ENCODE measurements at regions of chr2 and their contacts with region 1.

Region 1: DNA sequence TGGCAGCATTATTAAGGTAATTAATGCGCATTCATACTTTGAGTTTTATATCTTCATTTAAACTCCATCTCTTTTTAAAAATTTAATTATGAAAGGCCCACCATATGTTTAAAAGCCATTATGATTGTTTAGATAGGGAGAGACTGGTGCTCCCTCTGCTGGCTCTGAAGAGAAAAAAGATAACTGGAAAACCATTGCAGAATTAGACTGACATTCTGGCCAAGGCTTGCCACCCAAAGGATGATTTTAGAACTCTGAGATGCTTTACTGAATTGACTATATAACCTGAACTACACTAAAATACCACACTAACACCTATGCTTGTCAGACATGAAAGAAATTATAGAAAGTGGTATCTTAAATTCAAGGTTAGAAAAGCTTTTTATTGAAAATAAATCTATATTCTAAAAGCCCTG is 127.6 kb upstream of the SPOPL start:
- DNase-seq: no peak
- H3K4me3 ChIP-seq: no peak overlapping the region
- H3K27ac ChIP-seq: no peak overlapping the region
- H3K4me1 ChIP-seq: no peaks in the 10 kb centered on the region
- H3K27me3 ChIP-seq: no peaks in the 10 kb centered on the region
- CTCF ChIP-seq: peak; percentile 80

Region 2: DNA sequence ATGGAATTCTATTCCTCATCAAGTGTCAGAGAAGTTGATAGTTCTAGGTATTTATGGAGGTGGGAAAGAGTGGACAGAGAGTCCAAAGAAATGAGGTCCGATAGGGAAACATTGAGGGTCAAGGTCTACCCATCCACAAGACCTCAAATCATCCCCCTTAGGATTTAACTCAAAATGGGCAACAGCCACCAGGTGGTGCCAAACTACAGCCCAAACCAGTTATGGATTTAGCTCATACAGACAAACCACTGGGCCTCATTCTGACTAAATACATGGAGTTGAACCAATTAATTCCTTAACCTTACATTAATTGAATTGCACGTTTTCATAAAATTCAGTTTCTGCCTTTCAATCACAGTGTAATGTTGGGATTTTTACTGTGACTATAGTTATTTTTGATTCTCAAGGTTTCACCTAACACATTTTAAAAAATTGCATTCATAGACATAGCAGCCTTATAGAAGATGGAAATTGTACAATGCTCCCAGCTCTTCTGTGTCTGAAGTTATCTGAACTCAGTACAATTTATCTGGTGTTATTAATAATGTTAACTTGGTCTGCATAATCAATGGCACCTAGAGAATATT is 508.0 kb before region 1 on chr2:
- CTCF ChIA-PET with region 1: interaction called, 4 read pairs
- POLR2A ChIA-PET with region 1: no interaction called
- intact Hi-C with region 1: loop called (anchors 5 kb)
- DNase-seq: peak in 1 of 2 experiments; percentile 48
- H3K4me3 ChIP-seq: no peak overlapping the region
- H3K27ac ChIP-seq: no peak overlapping the region
- H3K4me1 ChIP-seq: no peaks in the 10 kb centered on the region
- H3K27me3 ChIP-seq: no peaks in the 10 kb centered on the region
- CTCF ChIP-seq: peak; percentile 73

Region 3: GRCh38 chr2:137910641-137911040 is 463.4 kb before region 1 on chr2:
- CTCF ChIA-PET with region 1: no interaction called
- POLR2A ChIA-PET with region 1: no interaction called
- intact Hi-C with region 1: loop called (anchors 1 kb)
- DNase-seq: no peak
- H3K4me3 ChIP-seq: no peak overlapping the region
- H3K27ac ChIP-seq: no peak overlapping the region
- H3K4me1 ChIP-seq: no peaks in the 10 kb centered on the region
- H3K27me3 ChIP-seq: no peaks in the 10 kb centered on the region
- CTCF ChIP-seq: peak; percentile 81

Region 4: GRCh38 chr2:137947728-137948336 is 426.2 kb before region 1 on chr2:
- CTCF ChIA-PET with region 1: no interaction called
- POLR2A ChIA-PET with region 1: no interaction called
- intact Hi-C with region 1: loop called (anchors 1 kb)
- DNase-seq: peak; percentile 51 to 59
- H3K4me3 ChIP-seq: no peak overlapping the region
- H3K27ac ChIP-seq: no peak overlapping the region
- H3K4me1 ChIP-seq: peaks cover 1% of the 10 kb centered on the region; the same call in 1 of the 2 replicates
- H3K27me3 ChIP-seq: no peaks in the 10 kb centered on the region
- CTCF ChIP-seq: peak; percentile 81

Region 5: GRCh38 chr2:138090330-138090729 is 283.7 kb before region 1 on chr2:
- CTCF ChIA-PET with region 1: no interaction called
- POLR2A ChIA-PET with region 1: no interaction called
- intact Hi-C with region 1: loop called (anchors 10 kb)
- DNase-seq: no peak
- H3K4me3 ChIP-seq: no peak overlapping the region
- H3K27ac ChIP-seq: no peak overlapping the region
- H3K4me1 ChIP-seq: peaks cover 13% of the 10 kb centered on the region
- H3K27me3 ChIP-seq: no peaks in the 10 kb centered on the region
- CTCF ChIP-seq: peak; percentile 68

Region 6: DNA sequence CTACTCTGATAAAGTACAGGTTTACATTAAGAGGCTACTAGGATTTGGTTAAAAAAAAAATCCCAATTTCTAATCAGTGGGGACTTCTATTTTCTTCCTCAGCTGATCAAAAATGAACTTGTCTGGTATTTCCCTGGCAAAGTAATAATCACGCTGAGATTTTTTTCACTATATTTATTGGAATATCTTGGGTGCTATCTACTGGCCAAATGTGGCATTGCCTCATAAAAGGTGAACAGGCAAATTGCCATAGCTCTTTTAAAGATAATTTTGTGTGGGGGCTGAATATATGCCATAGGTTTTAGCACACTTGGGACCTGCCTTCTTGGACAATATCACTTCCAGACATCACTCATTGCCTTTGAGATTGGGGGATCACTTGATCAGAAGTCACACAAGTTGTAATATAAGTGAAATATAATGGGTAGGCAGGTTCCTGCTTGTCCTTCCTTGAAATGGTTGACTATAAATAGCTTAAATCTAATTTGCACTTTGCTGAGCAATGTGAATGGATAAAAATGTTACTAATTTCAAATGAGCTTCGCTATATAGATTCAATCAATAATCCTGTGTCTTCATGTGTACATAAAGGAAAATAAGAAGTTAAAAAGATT is 413.2 kb after region 1 on chr2:
- CTCF ChIA-PET with region 1: no interaction called
- POLR2A ChIA-PET with region 1: no interaction called
- intact Hi-C with region 1: loop called (anchors 5 kb)
- DNase-seq: peak in 1 of 2 experiments; percentile 14
- H3K4me3 ChIP-seq: no peak overlapping the region
- H3K27ac ChIP-seq: no peak overlapping the region
- H3K4me1 ChIP-seq: no peaks in the 10 kb centered on the region
- H3K27me3 ChIP-seq: no peaks in the 10 kb centered on the region
- CTCF ChIP-seq: peak; percentile 82

Region 7: DNA sequence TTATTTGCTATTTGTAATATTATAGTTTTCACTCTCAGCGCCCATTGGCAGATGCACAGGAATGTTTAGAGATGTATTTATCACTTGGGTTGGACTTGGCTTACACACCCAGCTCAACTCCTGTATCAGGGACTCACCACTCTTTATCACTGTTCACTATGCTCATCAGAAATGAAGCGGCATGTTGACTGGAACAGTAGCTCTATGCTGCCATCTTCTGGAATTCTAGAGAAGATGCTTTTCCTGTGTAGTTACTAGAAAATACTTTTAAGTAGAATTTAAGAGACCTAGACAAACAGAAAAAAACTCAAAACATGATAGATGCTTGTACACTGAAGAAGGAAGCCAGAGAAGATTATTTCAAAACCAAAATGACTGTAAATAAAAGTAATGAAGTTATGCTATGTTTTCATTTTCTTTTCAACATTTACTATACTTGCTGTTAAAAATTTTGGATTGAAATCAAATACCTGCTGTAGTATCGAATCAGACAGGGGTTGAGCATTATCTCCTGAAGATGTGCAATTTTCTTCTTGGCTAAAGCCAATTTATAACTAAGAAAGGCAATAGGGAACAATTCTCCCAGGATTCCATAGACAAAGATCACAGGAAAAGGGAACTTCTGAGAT is 453.5 kb after region 1 on chr2:
- CTCF ChIA-PET with region 1: interaction called, 3 read pairs
- POLR2A ChIA-PET with region 1: no interaction called
- intact Hi-C with region 1: loop called (anchors 2 kb)
- DNase-seq: peak; percentile 15 to 56
- H3K4me3 ChIP-seq: no peak overlapping the region
- H3K27ac ChIP-seq: no peak overlapping the region
- H3K4me1 ChIP-seq: peaks cover 17% of the 10 kb centered on the region; the same call in 1 of the 2 replicates
- H3K27me3 ChIP-seq: no peaks in the 10 kb centered on the region
- CTCF ChIP-seq: peak; percentile 78

Measured in PC-9 (cell line).